ENCODE measurements at regions of chr2 and their contacts with region 1.

Region 1: DNA sequence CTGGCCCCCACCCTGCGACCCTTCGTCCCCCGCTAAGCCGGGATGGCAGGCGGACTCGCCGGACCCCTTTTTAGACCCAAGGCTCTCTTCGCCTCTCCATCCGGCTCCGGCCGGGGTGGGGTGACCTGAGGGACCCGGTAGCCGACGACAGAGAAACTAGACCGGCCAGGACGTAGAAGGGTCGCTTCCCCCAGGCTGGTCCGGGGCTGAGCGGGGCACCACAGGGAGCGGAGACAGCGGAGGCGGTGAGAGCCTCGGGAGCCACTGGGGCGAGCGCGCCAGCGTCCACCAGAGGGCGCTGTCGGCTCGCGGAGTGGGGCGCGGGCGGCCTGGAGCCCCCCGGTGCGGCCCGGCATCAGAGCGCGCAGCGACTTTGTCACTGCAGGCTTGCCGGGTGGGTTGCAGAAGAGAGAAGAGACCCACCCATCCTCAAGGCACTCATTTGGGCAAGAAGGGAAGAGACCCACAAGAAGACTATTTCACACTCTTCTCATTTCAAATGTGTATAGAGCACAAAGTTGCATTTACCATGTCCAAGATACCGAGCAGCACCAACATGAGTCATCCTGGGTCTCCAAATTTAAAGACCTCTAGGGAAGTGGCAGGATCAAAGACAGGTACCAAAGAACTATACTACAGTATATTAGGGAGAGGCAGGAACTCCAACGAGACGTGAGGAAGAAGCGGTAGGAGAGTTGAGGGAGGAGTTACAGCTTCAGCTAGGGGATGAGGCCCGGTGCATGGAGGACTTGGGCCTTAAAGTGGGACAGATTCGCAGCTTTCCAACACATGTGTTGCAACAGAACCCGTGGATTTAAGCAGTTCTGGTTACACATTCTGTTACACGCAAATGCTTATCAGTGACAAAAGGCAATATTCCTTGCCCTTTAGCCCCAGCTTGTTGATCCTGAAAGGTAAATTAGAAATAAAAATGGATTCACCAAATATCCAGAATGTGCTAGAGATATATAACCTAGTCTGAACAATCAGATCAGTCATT is 7.6 kb upstream of the PRKCE start:
- DNase-seq: peak in 41 of 42 donors; percentile 19 to 87 (median 71)

Region 2: DNA sequence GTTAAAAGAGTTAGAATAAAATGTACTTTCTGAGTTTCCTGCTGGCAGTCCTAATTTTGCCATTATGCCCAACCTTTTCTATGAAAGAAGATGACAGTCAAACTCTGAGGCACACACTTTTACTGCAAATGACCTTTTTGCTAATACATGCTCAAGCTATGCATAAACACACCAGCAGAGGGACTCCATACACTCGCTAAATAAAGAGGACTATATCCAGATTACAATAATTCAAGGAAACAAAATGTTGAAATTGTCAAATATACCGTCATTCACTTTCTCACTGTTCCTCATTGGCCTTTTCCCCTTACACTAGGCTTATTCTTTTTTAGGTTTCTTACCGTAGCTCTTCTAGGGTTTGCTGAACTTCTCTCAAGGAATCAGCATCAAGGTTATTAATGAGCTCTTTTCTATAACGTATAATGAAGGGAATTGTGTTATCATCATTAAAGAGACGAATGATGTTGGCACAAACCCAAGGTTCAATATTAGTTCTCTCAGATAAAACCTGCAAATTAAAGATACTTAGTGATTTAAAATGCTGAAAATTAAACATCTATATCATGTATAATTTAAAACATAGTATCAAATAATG is 58.5 kb before region 1 on chr2:
- intact Hi-C with region 1: no loop called
- DNase-seq: peak in 11 of 42 donors; percentile 8 to 54 (median 30)

Region 3: GRCh38 chr2:45778720-45779171 is 134.9 kb after region 1 on chr2:
- intact Hi-C with region 1: loop called (anchors 5 kb)
- DNase-seq: peak in 40 of 42 donors; percentile 26 to 90 (median 66)

Region 4: DNA sequence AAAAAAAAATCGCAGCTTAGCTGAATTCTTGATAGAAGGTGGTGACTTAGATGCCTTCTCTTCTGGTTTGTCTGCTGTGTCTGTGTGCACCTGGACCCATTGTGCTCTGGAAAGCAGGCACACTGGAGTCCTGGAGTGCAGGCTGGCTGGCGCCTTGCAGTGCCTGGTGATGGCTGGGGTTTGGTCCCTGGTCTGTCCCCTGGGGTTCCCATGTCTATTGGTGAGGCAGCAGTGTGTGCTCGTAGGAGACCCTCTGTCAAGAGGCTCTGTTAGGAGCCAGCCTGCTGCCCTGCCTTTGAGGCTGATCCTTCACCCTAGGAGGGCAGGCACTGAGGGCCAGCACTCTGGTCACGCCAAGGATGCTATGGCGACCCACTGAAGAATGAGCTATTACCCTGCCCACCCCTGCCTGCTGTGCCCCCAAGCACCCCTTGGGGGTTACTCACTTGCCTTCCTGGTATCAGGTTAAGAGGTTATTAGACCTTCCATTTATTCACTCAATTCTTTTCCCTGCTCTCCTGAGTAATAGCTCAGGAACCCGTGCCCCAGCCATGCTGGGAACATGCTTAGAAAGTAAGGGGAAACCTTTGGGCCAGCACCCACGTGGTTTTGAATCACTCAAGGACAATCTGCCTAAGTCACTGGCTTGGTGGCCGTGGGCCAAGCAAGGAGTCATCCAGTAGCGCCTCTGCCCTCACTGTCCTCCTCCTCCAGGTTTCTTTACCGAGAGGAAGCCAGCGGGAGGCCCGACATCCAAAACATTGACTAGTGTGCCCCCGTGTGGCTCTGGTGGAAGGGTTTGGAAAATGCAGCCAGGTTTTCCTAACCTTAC is 292.2 kb after region 1 on chr2:
- intact Hi-C with region 1: loop called (anchors 2 kb)
- DNase-seq: peak; percentile 71 to 93 (median 84)

Measured in head of caudate nucleus (tissue), 42 donors.